Activated CD4-positive, alpha-beta memory T cell treated with anti-CD3 and anti-CD28 coated beads, Interleukin-2, amount 10 ng/mL, durations not matched to agents 7 days and 5 days (primary cell): ENCODE measurements at regions of chr17 and their contacts with region 1.

Region 1: GRCh38 chr17:39794249-39794970 is 56.7 kb downstream of the GRB7 start:
- DNase-seq: no peak
- H3K4me3 Mint-ChIP-seq: no peak overlapping the region
- H3K27ac Mint-ChIP-seq: peak overlapping the region; percentile 88
- H3K4me1 Mint-ChIP-seq: peaks cover 63% of the 10 kb centered on the region
- H3K27me3 Mint-ChIP-seq: no peaks in the 10 kb centered on the region

Region 2: GRCh38 chr17:39738931-39739884 is 55.2 kb before region 1 on chr17:
- CTCF ChIA-PET with region 1: no interaction called
- POLR2A ChIA-PET with region 1: no interaction called
- DNase-seq: no peak
- H3K4me3 Mint-ChIP-seq: peak overlapping the region; percentile 32
- H3K27ac Mint-ChIP-seq: no peak overlapping the region
- H3K4me1 Mint-ChIP-seq: peaks cover 24% of the 10 kb centered on the region
- H3K27me3 Mint-ChIP-seq: peaks cover 17% of the 10 kb centered on the region

Region 3: GRCh38 chr17:39754161-39754951 is 40.1 kb before region 1 on chr17:
- CTCF ChIA-PET with region 1: interaction called, 6 read pairs
- POLR2A ChIA-PET with region 1: interaction called, 53 read pairs
- DNase-seq: peak; percentile 99
- H3K4me3 Mint-ChIP-seq: peak overlapping the region; percentile 77
- H3K27ac Mint-ChIP-seq: peak overlapping the region; percentile 67
- H3K4me1 Mint-ChIP-seq: peaks cover 59% of the 10 kb centered on the region
- H3K27me3 Mint-ChIP-seq: no peaks in the 10 kb centered on the region

Region 4: DNA sequence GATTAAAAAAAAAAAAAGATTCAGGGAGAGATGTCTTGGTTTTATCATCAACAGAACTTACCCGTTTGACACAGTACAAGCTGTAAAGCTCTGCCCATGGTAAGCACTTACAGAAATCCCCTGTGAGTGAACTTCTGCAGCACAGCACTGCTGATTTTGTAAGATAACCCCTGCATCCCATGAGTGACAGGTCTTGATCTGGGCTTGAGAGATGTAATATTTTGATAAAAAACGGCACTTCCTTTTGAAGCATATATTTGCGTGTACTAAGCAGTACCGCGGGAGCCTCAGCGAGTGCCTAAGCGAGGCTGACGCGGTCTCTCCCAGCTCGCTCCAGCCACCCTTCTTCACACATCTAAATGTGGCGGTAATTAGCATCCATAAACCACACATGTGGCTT is 19.2 kb after region 1 on chr17:
- CTCF ChIA-PET with region 1: interaction called, 8 read pairs
- POLR2A ChIA-PET with region 1: interaction called, 50 read pairs
- DNase-seq: peak; percentile 62
- H3K4me3 Mint-ChIP-seq: peak overlapping the region; percentile 59
- H3K27ac Mint-ChIP-seq: peak overlapping the region; percentile 67
- H3K4me1 Mint-ChIP-seq: peaks cover 69% of the 10 kb centered on the region
- H3K27me3 Mint-ChIP-seq: no peaks in the 10 kb centered on the region

Region 5: GRCh38 chr17:39822051-39822451 is 27.6 kb after region 1 on chr17:
- CTCF ChIA-PET with region 1: interaction called, 4 read pairs
- POLR2A ChIA-PET with region 1: interaction called, 50 read pairs
- DNase-seq: no peak
- H3K4me3 Mint-ChIP-seq: no peak overlapping the region
- H3K27ac Mint-ChIP-seq: no peak overlapping the region
- H3K4me1 Mint-ChIP-seq: peaks cover 52% of the 10 kb centered on the region
- H3K27me3 Mint-ChIP-seq: no peaks in the 10 kb centered on the region

Region 6: GRCh38 chr17:39863918-39864746 is 69.7 kb after region 1 on chr17 and contains the start of gene IKZF3:
- CTCF ChIA-PET with region 1: interaction called, 3 read pairs
- POLR2A ChIA-PET with region 1: interaction called, 21 read pairs
- DNase-seq: peak; percentile 80
- H3K4me3 Mint-ChIP-seq: peak within 1 kb of the TSS; percentile 84
- H3K27ac Mint-ChIP-seq: peak within 1 kb of the TSS; percentile 80
- H3K4me1 Mint-ChIP-seq: peaks cover 64% of the 10 kb centered on the region
- H3K27me3 Mint-ChIP-seq: no peaks in the 10 kb centered on the region
- total RNA-seq, gene IKZF3: 37.9 to 38.2 TPM